ENCODE measurements at regions of chr13 and their contacts with region 1.

Region 1: DNA sequence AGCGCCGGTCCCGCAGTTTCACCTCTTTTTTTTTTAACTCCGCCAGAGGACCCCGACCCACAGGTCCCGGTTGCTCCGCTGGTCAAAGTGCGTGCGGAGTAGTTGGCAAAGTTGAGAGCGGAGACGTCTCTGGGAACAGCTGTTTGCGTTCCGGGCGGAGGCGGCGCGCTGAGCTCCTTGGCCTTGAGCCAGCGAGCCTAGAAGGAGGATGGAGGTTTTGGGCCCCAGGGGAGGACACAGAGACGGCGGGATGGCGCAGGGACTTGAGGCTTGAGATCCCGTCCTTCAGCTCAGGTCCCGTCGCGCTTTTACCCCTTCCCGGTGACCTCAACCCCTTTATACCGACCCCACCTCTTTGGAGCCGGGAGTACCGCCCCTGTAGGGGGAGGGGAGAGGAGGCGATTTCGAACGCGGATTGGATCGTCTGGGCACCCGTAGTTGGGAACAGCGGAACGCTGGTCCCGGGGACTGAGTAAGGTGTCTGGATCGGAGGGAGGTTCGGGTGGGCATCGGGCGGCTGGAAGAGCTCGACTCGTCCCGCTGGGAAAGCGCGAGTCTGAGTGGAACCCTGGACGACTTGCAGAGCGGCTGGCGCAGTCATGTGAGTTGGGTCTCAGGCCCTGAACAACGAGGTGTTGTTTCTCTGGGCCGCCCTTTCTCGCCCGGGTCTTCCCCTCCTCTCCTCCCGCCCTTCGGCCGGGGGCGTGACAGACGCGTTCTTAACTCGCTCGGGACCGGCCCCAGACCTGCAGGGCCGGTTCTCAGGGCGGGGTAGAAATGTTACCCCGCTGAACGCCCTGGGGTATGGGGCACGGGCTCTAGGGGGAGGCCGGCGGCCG is at the start of gene WBP4:
- DNase-seq: peak; percentile 86 to 94 (median 88)
- H3K4me3 ChIP-seq: peak within 1 kb of the TSS; percentile 70 to 98 (median 90)
- H3K27ac ChIP-seq: peak within 1 kb of the TSS; percentile 96 to 100 (median 99)
- H3K27me3 ChIP-seq: no peaks in the 10 kb centered on the region
- CTCF ChIP-seq: peak in 25 of 56 donors; percentile 3 to 44 (median 16)
- total RNA-seq, gene WBP4: 10.6 to 23.8 (median 17.6) TPM

Region 2: GRCh38 chr13:40770934-40771618 is 290.2 kb before region 1 on chr13 and contains the start of gene MRPS31:
- intact Hi-C with region 1: loop called (anchors 5 kb)
- DNase-seq: peak; percentile 86 to 95 (median 94)
- H3K4me3 ChIP-seq: peak within 1 kb of the TSS; percentile 61 to 99 (median 86)
- H3K27ac ChIP-seq: peak within 1 kb of the TSS in 58 of 59 donors; percentile 33 to 93 (median 80)
- H3K27me3 ChIP-seq: no peaks in the 10 kb centered on the region
- CTCF ChIP-seq: peak in 42 of 56 donors; percentile 3 to 58 (median 36)
- total RNA-seq, gene MRPS31: 18.5 to 39.4 (median 27.6) TPM

Region 3: DNA sequence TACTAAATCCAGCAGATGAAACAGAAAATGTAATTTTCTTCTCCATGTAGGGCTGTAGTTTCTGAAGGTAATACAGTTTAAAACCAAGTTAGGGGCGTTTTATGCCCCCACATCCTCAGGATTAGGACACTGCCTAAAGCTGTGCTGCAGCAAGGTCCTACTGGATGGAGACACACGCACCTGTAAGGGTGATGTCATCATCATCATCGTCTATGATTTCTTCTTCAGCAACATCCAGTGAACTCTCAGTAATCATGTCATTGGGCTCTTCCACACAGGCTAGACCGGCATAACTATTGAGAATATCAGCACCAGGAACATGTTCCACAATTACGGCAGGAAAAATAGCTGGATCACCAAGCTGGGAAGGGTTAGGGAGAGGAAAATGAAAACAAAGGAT is 102.6 kb before region 1 on chr13:
- intact Hi-C with region 1: no loop called
- DNase-seq: no peak
- H3K4me3 ChIP-seq: no peak overlapping the region
- H3K27ac ChIP-seq: no peak overlapping the region
- H3K27me3 ChIP-seq: no peaks in the 10 kb centered on the region
- CTCF ChIP-seq: no peak

Region 4: DNA sequence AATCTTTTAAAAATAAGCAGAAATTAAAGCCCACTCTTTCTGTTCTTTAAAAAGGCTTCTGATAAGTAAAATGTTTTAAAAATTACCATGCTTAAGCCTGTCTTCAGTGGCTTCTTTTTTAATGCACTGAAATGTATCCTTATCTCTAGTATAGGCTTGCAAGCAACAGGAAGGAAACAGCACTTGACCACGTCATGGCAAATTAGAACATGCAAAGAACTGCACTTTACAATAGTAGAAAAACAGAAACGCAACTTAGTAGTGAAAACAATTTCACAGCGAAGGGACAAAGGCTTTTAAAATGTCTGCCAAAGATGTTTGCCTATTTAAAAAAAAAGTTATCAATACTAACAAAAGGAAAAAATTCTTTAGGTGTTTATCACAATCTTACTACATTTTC is 78.5 kb before region 1 on chr13:
- intact Hi-C with region 1: loop called (anchors 5 kb)
- DNase-seq: peak in 1 of 10 donors; percentile 23
- H3K4me3 ChIP-seq: peak overlapping the region in 54 of 59 donors; percentile 0 to 55 (median 24)
- H3K27ac ChIP-seq: peak overlapping the region in 58 of 59 donors; percentile 9 to 92 (median 81)
- H3K27me3 ChIP-seq: no peaks in the 10 kb centered on the region
- CTCF ChIP-seq: no peak

Region 5: DNA sequence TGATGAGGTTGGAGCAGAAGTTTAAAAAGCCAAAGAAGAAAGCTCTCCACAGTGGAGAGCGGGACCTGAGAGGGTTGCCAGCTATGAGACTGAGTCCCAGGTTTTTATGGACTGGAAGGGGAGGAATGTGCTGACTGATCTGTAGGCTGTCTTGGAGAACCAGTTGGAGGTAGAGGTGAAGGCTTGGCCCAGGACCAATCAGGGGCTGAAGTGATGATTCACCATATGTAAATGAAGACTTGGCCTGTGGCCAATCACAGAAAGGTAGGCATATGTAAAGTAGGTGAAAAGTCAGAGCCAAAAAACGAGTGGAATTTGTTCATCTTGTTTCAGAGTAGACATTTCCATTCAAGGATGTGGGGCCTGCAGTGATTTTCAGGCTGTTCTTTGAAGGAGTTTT is 88.8 kb after region 1 on chr13:
- intact Hi-C with region 1: no loop called
- DNase-seq: no peak
- H3K4me3 ChIP-seq: no peak overlapping the region
- H3K27ac ChIP-seq: no peak overlapping the region
- H3K27me3 ChIP-seq: no peaks in the 10 kb centered on the region
- CTCF ChIP-seq: no peak

Region 6: DNA sequence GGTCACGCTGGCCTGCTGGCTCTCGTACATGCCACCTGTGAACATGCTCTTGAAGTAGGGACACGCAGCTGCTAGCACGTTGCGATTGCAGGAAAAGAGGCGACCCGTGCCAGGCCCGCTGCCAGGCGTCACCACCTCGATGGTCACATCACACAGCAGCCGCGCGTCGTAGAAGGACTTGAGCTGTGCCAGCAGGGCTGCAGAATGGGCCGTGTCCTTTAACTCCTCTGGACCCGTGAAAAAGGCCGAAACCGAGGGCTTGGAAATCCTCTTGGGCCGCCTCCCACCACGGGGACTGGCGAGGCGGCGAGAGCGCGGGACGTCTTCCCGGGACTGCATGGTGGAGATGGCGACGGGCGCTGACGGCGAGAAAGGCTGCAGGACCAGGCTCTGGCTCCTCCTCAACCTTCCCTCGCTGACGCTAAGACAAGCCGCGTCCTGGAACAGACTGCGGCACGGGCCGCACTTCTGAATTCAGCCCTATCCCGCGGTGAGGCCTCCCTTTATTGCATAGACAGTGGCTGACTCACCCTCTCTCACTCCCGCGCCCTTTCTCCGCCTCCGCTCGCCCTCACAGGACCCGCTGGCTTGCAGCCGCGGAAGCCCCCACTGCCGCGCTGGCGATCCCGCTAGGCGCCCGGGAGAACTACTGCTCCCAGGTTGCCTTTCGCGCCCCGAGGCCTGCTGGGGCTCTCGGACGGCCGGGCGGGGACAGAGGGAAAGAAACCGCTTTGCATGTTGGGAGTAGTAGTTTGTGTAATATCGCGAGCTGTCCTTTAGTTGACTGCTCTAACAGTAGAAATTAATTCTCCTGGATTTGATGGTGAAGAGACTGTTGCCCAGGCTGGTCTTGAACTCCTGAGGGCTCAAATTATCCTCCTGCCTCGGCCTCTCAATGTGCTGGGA is 132.9 kb after region 1 on chr13 and contains the start of gene KBTBD7:
- intact Hi-C with region 1: loop called (anchors 2 to 5 kb)
- DNase-seq: peak; percentile 86 to 98 (median 94)
- H3K4me3 ChIP-seq: peak within 1 kb of the TSS; percentile 56 to 96 (median 86)
- H3K27ac ChIP-seq: peak within 1 kb of the TSS; percentile 61 to 97 (median 90)
- H3K27me3 ChIP-seq: no peaks in the 10 kb centered on the region
- CTCF ChIP-seq: peak in 38 of 56 donors; percentile 13 to 55 (median 32)
- total RNA-seq, gene KBTBD7: 9.2 to 16.8 (median 13.1) TPM

Region 7: GRCh38 chr13:41310963-41311606 is 249.8 kb after region 1 on chr13 and contains the start of gene NAA16:
- intact Hi-C with region 1: loop called in 1 of 2 experiments (anchors 5 kb)
- DNase-seq: peak; percentile 81 to 95 (median 88)
- H3K4me3 ChIP-seq: peak within 1 kb of the TSS; percentile 66 to 100 (median 96)
- H3K27ac ChIP-seq: peak within 1 kb of the TSS; percentile 63 to 100 (median 97)
- H3K27me3 ChIP-seq: no peaks in the 10 kb centered on the region
- CTCF ChIP-seq: peak in 37 of 56 donors; percentile 5 to 53 (median 28)
- total RNA-seq, gene NAA16: 20.9 to 64.0 (median 31.6) TPM

Measured in dorsolateral prefrontal cortex (tissue), 120 donors.